Activated naive CD8-positive, alpha-beta T cell treated with anti-CD3 and anti-CD28 coated beads, Interleukin-2, amount 10 ng/mL, durations not matched to agents 7 days and 5 days (primary cell): ENCODE measurements at regions of chr20 and their contacts with region 1.

Region 1: DNA sequence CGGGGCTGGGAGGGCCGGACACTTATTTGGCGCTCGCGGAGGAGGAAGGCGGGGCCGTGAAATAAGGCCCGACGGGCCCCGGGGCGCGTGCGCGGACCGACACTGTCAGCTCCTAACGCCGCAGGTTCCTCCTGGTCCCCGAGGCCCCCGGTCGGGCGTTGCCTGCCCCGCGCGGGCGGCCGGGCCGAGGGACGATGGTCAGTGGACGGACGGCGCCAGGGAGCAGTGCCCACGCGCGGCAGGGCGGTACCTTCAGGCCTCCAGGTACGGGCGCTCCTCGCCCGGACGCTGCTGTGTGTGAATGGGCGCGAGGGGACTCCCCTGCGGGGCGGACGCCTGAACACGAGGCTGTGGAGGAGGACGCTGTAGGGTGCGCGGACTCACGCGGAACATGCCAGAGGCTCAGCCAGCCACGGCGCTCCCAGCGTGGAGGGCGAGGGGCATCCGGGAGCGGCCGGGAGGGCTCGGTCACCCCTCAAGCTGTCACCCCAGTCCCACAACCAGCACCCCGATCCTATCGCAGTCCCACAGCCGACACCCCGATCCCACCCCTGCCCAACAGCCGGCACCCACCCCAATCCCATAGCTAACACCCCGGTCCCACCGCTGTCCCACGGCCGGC is 339 bp upstream of the GMEB2 start:
- DNase-seq: peak; percentile 97
- ATAC-seq: peak; percentile 85
- H3K4me3 Mint-ChIP-seq: peak overlapping the region; percentile 98
- H3K27ac Mint-ChIP-seq: peak overlapping the region; percentile 96
- H3K4me1 Mint-ChIP-seq: peaks cover 23% of the 10 kb centered on the region
- H3K27me3 Mint-ChIP-seq: no peaks in the 10 kb centered on the region

Region 2: DNA sequence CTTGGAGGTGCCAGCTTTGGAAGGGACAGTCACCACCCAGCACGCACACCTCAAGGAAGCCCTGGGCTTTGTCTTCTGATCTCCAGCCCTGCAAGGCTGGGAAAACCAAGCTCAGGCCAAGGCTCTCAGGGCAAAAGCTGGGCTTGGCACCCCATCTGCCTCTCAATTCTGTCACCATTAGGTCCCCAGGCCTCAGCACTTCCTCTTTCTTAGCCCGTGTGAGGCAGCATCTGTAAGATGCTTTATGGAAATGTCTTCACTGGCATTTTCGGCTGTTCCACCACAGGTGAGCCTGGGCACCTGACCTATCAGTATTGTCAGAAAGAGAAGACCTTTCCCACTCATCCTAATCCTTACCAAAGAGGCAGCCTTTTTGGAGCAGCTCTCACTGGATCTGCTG is 24.9 kb before region 1 on chr20:
- POLR2A ChIA-PET with region 1: no interaction called
- DNase-seq: no peak
- ATAC-seq: no peak
- H3K4me3 Mint-ChIP-seq: no peak overlapping the region
- H3K27ac Mint-ChIP-seq: no peak overlapping the region
- H3K4me1 Mint-ChIP-seq: peaks cover 2% of the 10 kb centered on the region
- H3K27me3 Mint-ChIP-seq: no peaks in the 10 kb centered on the region

Region 3: GRCh38 chr20:63657937-63658748 is 30.9 kb after region 1 on chr20 and contains the start of gene RTEL1:
- POLR2A ChIA-PET with region 1: interaction called, 12 read pairs
- DNase-seq: peak; percentile 97
- ATAC-seq: peak; percentile 82
- H3K4me3 Mint-ChIP-seq: peak within 1 kb of the TSS; percentile 95
- H3K27ac Mint-ChIP-seq: peak within 1 kb of the TSS; percentile 92
- H3K4me1 Mint-ChIP-seq: peaks cover 17% of the 10 kb centered on the region
- H3K27me3 Mint-ChIP-seq: no peaks in the 10 kb centered on the region
- total RNA-seq, gene RTEL1: 41.3 to 41.5 TPM